Heart left ventricle (tissue), 16 donors: ENCODE measurements at regions of chr9 and their contacts with region 1.

Region 1: DNA sequence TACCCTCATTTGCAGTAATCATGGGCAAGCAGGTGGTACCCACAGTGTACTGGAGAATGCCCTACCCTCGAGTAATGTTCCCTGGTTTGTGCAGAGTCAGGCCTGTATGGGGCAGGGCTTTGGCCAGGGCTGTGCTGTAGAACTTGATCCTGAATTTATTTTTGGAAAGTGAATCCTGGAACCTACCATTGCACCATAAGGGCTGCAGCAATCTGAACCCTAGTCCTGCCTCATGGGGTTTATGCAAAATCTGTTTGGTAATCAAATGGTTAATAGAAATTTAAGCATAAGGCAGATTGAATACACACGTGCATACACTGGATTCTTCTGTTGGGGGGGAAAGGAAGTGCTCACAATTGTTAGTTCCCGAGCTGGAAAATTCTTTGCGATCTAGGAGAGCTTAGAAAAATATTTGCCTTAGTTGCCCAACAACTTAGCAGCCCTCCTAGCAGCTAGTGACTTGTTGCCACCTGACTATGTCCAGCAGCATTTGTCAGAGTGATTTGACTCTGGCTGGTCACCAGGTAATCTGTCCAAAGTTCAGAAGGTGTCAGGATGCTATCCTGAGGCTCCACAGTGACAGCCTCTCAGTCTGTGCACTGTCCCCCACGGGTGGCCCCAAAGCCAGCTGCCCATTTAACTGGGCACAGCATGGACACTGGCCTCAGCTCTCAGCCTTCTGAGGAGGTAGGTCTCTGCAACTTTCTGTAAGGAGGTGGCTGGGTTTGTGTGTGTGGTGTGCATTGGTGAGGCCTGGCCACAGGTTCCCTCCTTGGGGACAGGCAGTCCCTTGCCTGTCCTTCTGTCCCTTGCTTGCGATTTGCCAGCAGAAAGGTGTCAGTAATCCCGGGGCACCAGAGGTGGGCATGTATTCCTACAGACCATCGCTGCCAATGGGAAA is 8.3 kb downstream of the MVB12B start:
- DNase-seq: no peak
- ATAC-seq: peak; percentile 68 to 87 (median 82)
- H3K4me3 ChIP-seq: peak overlapping the region in 5 of 12 donors; percentile 5 to 22 (median 12)
- H3K27ac ChIP-seq: peak overlapping the region in 11 of 12 donors; percentile 33 to 72 (median 52)
- H3K4me1 ChIP-seq: peaks cover 2 to 67% (median 38%) of the 10 kb centered on the region in 12 donors
- H3K27me3 ChIP-seq: no peaks in the 10 kb centered on the region
- CTCF ChIP-seq: no peak
- POLR2A ChIP-seq: no peak

Region 2: GRCh38 chr9:126375386-126375785 is 40.4 kb after region 1 on chr9:
- intact Hi-C with region 1: loop called in 1 of 10 experiments (anchors 5 kb)
- DNase-seq: peak in 4 of 5 donors; percentile 56 to 65 (median 60)
- ATAC-seq: peak; percentile 72 to 94 (median 84)
- H3K4me3 ChIP-seq: peak overlapping the region in 2 of 12 donors; percentile 7 to 13
- H3K27ac ChIP-seq: peak overlapping the region in 7 of 12 donors; percentile 14 to 73 (median 27)
- H3K4me1 ChIP-seq: peaks cover 0 to 44% (median 18%) of the 10 kb centered on the region in 12 donors
- H3K27me3 ChIP-seq: no peaks in the 10 kb centered on the region
- CTCF ChIP-seq: peak in 1 of 12 donors; percentile 10
- POLR2A ChIP-seq: no peak